ENCODE measurements at regions of chr3 and their contacts with region 1.

Region 1: DNA sequence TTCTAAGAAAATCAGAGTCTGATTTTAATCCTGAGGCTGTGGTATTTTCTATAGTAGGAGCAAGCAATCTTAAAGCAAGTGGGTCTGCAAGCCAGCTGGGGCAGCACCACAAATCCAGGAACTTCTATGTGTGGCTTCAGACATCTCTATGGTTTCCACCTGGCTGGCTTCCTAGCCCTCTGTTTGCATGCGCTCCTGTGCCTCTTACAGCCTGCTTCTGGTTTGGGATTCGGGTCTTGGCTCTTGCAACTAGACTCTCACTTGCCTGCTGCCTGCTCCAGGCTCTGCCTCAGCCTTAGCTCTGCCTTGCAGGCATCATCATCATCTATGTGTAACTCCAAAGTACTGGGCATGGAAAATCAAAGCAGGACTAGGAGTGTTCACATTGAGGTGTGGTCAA is 43.4 kb downstream of the MINDY4B start:
- DNase-seq: no peak
- ATAC-seq: no peak
- H3K4me3 ChIP-seq: no peak overlapping the region
- H3K27ac ChIP-seq: no peak overlapping the region
- H3K4me1 ChIP-seq: peaks cover 0 to 4% (median 0%) of the 10 kb centered on the region in 3 donors
- H3K27me3 ChIP-seq: no peaks in the 10 kb centered on the region
- CTCF ChIP-seq: no peak

Region 2: DNA sequence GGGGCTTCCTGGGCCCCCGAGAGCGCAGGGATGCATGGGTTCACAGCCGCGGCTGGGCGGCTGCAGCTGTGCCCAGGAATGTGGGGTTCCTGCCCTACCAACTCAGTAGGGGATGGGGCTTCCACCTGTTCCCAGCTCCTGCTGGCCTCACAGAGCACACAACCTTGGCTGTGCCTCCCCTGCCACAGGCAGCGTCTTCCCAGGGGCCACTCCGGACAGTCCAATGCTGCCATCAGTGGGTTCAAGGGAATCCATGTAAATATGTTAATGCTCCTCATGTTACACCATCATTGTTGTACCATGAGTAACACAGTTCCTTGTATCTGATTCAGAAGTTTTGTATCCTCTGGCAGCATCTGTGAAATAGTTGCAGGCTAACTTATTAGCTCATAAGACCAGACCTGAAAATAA is 86.8 kb before region 1 on chr3:
- intact Hi-C with region 1: loop called in 1 of 3 experiments (anchors 5 kb)
- DNase-seq: no peak
- ATAC-seq: no peak
- H3K4me3 ChIP-seq: no peak overlapping the region
- H3K27ac ChIP-seq: no peak overlapping the region
- H3K4me1 ChIP-seq: peaks cover 0 to 3% (median 0%) of the 10 kb centered on the region in 3 donors
- H3K27me3 ChIP-seq: no peaks in the 10 kb centered on the region
- CTCF ChIP-seq: no peak

Measured in pancreas (tissue), 10 donors.